Activated naive CD4-positive, alpha-beta T cell treated with anti-CD3 and anti-CD28 coated beads for 36 hours (primary cell): ENCODE measurements at regions of chr17 and their contacts with region 1.

Region 1: GRCh38 chr17:6843241-6843880 is 11.8 kb upstream of the TEKT1 start:
- DNase-seq: no peak
- H3K4me3 Mint-ChIP-seq: no peak overlapping the region
- H3K27ac Mint-ChIP-seq: no peak overlapping the region
- H3K4me1 Mint-ChIP-seq: peaks cover 5% of the 10 kb centered on the region
- H3K27me3 Mint-ChIP-seq: peaks cover 21% of the 10 kb centered on the region

Region 2: GRCh38 chr17:5877948-5878347 is 965.4 kb before region 1 on chr17:
- CTCF ChIA-PET with region 1: no interaction called
- intact Hi-C with region 1: no loop called
- DNase-seq: no peak
- H3K4me3 Mint-ChIP-seq: no peak overlapping the region
- H3K27ac Mint-ChIP-seq: no peak overlapping the region
- H3K4me1 Mint-ChIP-seq: no peaks in the 10 kb centered on the region
- H3K27me3 Mint-ChIP-seq: peaks cover 4% of the 10 kb centered on the region

Region 3: DNA sequence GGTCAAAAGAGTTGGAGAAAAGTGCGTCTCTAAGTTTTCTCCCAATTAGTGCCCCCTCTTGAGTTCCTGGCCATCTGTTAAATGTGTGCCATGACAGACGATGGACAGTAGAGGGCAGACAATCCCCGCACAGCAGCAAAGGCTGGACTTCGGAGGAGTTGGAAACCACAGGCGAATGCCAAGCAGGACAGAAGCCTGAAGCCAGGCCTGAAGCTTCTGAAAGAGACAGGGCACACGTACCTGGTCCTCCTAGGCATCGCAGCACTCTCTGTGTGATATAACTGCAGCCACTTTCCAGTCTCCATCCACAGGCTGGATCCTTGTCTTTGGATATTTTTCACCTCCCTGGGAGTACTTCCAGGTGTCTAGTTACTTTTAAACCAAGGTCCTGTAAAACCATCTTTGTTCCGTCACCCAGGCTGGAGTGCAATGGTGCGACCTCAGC is 177.3 kb before region 1 on chr17:
- CTCF ChIA-PET with region 1: interaction called, 21 read pairs
- intact Hi-C with region 1: loop called (anchors 1 kb)
- DNase-seq: peak; percentile 65
- H3K4me3 Mint-ChIP-seq: no peak overlapping the region
- H3K27ac Mint-ChIP-seq: no peak overlapping the region
- H3K4me1 Mint-ChIP-seq: peaks cover 10% of the 10 kb centered on the region
- H3K27me3 Mint-ChIP-seq: no peaks in the 10 kb centered on the region

Region 4: DNA sequence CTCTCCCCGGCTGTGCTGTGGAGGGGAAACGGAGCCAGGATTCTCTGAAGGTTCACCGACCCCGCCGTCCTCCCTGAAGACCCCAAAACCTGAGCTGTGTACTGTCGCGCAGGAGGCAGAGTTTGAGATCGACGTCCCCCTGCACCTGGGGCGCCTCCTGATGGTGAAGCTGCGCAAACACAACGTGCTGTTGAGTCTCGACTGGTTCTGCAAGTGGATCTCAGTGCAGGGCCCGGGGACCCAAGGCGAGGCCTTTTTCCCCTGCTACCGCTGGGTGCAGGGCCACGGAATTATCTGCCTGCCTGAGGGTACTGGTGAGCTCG is 50.8 kb after region 1 on chr17:
- CTCF ChIA-PET with region 1: interaction called, 29 read pairs
- intact Hi-C with region 1: loop called (anchors 1 kb)
- DNase-seq: peak; percentile 63
- H3K4me3 Mint-ChIP-seq: no peak overlapping the region
- H3K27ac Mint-ChIP-seq: no peak overlapping the region
- H3K4me1 Mint-ChIP-seq: peaks cover 5% of the 10 kb centered on the region
- H3K27me3 Mint-ChIP-seq: peaks cover 62% of the 10 kb centered on the region

Region 5: GRCh38 chr17:7021993-7022778 is 178.8 kb after region 1 on chr17:
- CTCF ChIA-PET with region 1: interaction called, 6 read pairs
- intact Hi-C with region 1: loop called (anchors 1 kb)
- DNase-seq: peak; percentile 80
- H3K4me3 Mint-ChIP-seq: peak overlapping the region; percentile 59
- H3K27ac Mint-ChIP-seq: peak overlapping the region; percentile 26
- H3K4me1 Mint-ChIP-seq: peaks cover 29% of the 10 kb centered on the region
- H3K27me3 Mint-ChIP-seq: peaks cover 4% of the 10 kb centered on the region